Pancreas (tissue), 10 donors: ENCODE measurements at regions of chr21 and their contacts with region 1.

Region 1: GRCh38 chr21:40466893-40467501 is 380.0 kb downstream of the DSCAM start:
- DNase-seq: peak in 1 of 6 donors; percentile 15
- ATAC-seq: peak in 1 of 4 donors; percentile 42
- H3K4me3 ChIP-seq: no peak overlapping the region
- H3K27ac ChIP-seq: no peak overlapping the region
- H3K4me1 ChIP-seq: no peaks in the 10 kb centered on the region
- H3K27me3 ChIP-seq: peaks cover 0 to 25% (median 2%) of the 10 kb centered on the region in 4 donors
- CTCF ChIP-seq: peak in 2 of 4 donors; percentile 26 to 42

Region 2: DNA sequence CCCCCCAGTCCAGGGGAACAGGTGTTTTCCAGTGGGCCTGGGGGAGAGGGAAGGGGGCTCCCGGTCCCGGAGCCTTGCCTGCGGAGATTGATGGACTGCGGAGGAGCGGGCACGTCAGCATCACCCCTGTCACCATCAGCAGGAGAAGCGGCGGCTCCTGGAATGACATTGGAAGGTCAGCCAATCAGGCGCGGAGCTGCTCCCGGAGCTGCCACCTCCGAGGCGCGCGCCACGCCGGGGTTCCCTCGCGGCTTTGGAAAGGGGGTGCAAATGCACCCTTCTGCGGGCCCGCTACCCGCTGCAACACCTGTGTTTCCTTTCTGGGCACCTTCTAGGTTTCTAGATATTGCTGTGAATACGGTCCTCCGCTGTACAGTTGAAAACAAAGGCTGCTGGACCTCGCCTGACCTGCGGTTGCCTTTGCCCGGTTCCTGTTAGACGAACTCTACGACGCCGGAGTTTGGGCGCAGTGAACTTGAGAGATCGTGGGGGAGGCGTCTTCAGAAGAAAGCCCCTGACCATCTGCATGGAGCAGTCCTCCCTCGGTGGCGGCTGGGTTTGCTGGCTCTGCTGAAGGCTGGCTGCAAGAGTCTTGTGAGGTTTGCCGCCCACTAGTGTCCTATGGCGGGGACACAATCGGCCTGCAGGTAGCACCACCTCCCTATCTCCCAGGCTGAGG is 374.7 kb after region 1 on chr21:
- intact Hi-C with region 1: loop called in 1 of 3 experiments (anchors 10 kb)
- DNase-seq: peak; percentile 36 to 85 (median 60)
- ATAC-seq: peak; percentile 82 to 98 (median 93)
- H3K4me3 ChIP-seq: peak overlapping the region in 1 of 4 donors; percentile 35
- H3K27ac ChIP-seq: no peak overlapping the region
- H3K4me1 ChIP-seq: no peaks in the 10 kb centered on the region
- H3K27me3 ChIP-seq: peaks cover 0 to 51% (median 10%) of the 10 kb centered on the region in 4 donors
- CTCF ChIP-seq: peak in 3 of 4 donors; percentile 42 to 46 (median 46)